Activated CD4-positive, alpha-beta T cell treated with anti-CD3 and anti-CD28 coated beads for 36 hours (primary cell): ENCODE measurements at regions of chr18 and their contacts with region 1.

Region 1: DNA sequence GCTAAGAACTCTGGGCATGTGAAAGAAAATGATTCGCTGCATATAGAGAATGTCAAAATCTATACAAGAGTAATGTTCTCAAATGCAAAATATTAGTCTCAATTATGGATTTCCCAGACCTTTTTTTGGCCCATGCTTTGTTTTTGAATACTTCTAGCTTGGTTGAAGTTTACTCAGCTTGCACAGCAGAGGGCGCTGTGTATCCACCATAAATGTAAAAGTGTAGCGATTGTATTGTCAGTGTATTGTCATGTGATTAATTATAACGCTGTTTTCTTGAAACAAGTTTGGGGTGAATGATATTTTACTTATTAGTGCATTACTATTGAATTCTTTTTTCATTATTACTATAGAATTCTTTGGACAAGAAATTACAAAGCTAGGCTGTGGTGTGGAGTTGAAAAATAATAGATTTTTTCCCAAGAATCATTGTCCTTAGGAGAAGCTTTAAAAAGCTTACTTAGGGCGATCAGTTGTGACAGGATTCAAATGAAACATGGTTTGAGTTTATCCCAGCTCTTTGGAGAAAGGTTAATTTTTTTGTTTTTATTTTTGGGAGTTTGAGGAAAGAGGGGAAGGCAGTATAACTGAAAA is 98.3 kb downstream of the PIK3C3 start:
- DNase-seq: peak; percentile 81
- ATAC-seq: peak; percentile 80
- H3K4me3 Mint-ChIP-seq: no peak overlapping the region
- H3K27ac Mint-ChIP-seq: no peak overlapping the region
- H3K4me1 Mint-ChIP-seq: peaks cover 15% of the 10 kb centered on the region
- H3K27me3 Mint-ChIP-seq: no peaks in the 10 kb centered on the region

Region 2: GRCh38 chr18:41993151-41993550 is 60.1 kb before region 1 on chr18:
- CTCF ChIA-PET with region 1: no interaction called
- POLR2A ChIA-PET with region 1: no interaction called
- intact Hi-C with region 1: no loop called
- DNase-seq: no peak
- ATAC-seq: no peak
- H3K4me3 Mint-ChIP-seq: no peak overlapping the region
- H3K27ac Mint-ChIP-seq: no peak overlapping the region
- H3K4me1 Mint-ChIP-seq: peaks cover 4% of the 10 kb centered on the region
- H3K27me3 Mint-ChIP-seq: no peaks in the 10 kb centered on the region

Region 3: GRCh38 chr18:42038936-42039335 is 14.3 kb before region 1 on chr18:
- CTCF ChIA-PET with region 1: interaction called, 29 read pairs
- POLR2A ChIA-PET with region 1: no interaction called
- intact Hi-C with region 1: no loop called
- DNase-seq: no peak
- ATAC-seq: no peak
- H3K4me3 Mint-ChIP-seq: no peak overlapping the region
- H3K27ac Mint-ChIP-seq: no peak overlapping the region
- H3K4me1 Mint-ChIP-seq: no peaks in the 10 kb centered on the region
- H3K27me3 Mint-ChIP-seq: no peaks in the 10 kb centered on the region

Region 4: DNA sequence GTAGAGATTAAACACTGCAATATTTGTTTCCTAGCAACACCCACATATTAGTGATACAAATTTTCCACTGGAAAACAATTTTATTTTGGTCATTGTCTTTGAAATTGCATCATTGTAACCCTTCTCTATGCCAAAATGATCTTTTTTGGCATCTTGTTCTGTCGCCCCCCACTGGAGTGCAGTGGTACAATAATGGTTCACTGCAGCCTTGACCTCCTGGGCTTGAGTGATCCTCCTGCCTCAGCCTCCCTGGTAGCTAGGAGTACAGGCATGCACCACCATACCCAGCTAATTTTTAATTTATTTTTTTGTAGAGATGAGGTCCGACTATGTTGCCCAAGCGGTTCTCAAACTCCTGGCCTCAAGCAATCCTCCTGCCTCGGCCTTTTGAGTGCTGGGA is 19.1 kb after region 1 on chr18:
- CTCF ChIA-PET with region 1: interaction called, 11 read pairs
- POLR2A ChIA-PET with region 1: no interaction called
- intact Hi-C with region 1: no loop called
- DNase-seq: peak; percentile 34
- ATAC-seq: peak; percentile 53
- H3K4me3 Mint-ChIP-seq: no peak overlapping the region
- H3K27ac Mint-ChIP-seq: no peak overlapping the region
- H3K4me1 Mint-ChIP-seq: no peaks in the 10 kb centered on the region
- H3K27me3 Mint-ChIP-seq: no peaks in the 10 kb centered on the region

Region 5: GRCh38 chr18:42373584-42373983 is 320.3 kb after region 1 on chr18:
- CTCF ChIA-PET with region 1: no interaction called
- POLR2A ChIA-PET with region 1: no interaction called
- intact Hi-C with region 1: no loop called
- DNase-seq: no peak
- ATAC-seq: no peak
- H3K4me3 Mint-ChIP-seq: no peak overlapping the region
- H3K27ac Mint-ChIP-seq: no peak overlapping the region
- H3K4me1 Mint-ChIP-seq: no peaks in the 10 kb centered on the region
- H3K27me3 Mint-ChIP-seq: no peaks in the 10 kb centered on the region

Region 6: DNA sequence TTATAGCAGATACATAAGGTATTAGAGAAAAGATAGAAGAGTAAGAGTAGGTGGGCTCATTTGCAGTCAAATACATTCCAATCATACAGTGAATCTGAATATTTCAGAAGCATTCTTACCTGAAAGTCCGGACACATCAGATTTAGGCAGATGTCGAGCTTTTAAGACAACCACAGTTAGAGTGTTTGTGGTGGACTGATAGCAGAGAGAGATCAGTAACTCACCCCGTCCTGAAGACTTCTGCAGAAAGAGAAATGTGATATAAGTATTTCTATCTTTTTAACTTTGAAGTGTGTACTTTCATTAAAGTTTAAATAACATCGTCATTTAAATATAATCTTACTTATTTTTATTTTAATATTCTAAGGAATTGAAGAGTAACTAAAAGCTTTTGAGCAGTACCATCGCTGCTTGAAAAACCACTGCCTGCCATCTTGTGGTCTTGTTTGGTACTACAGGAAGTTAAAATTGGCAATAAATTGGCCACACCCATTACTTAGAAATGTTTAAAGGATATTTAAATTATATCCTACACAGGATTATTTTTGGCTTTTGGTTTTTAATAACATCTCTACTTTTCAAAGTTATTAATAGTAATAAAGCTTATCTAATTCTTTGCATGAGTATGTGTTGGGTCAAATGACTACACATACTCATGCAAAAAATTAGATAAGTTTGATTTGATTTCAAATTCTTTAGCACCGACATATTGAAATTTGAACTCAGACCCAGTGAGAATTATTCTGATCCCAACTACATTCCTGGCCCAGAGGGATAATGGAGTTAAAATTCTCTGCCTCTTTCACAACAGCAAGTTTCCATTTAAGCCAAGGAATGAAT is 1218.5 kb after region 1 on chr18:
- CTCF ChIA-PET with region 1: interaction called, 9 read pairs
- POLR2A ChIA-PET with region 1: no interaction called
- intact Hi-C with region 1: loop called in 1 of 2 experiments (anchors 5 kb)
- DNase-seq: peak; percentile 26
- ATAC-seq: no peak
- H3K4me3 Mint-ChIP-seq: no peak overlapping the region
- H3K27ac Mint-ChIP-seq: no peak overlapping the region
- H3K4me1 Mint-ChIP-seq: no peaks in the 10 kb centered on the region
- H3K27me3 Mint-ChIP-seq: peaks cover 2% of the 10 kb centered on the region